Esophagus muscularis mucosa (tissue), 4 donors: ENCODE measurements at regions of chr7 and their contacts with region 1.

Region 1: DNA sequence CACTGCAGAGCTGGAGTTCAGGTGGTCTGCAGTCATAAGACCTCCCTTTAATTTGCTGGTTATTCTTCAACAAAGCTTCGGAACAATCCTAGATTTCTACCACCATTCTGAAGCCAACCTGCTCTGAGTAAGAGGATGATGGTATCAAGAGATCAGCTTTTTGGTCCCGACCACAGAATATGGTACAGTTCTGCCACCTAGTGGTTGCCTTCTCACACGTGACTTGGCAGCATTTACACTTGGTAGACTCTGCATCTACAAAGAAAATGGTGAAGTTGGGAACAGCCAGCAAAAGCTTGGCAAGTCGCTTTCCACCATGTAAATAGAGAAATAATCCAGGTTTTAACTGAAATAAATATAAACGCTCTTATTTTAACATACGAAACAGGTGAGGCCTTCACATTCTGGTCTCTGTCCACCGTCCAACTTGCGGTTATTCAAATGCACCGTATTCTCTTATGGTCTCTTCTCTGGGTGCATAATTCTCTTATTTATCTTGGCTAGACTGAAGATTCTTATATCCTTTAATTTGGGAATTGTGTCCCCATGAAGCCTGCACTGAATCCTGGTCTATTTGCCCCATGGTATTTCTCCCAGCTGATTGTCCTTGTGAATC is 173.9 kb upstream of the GRM3 start:
- DNase-seq: no peak
- H3K4me3 ChIP-seq: no peak overlapping the region
- H3K27ac ChIP-seq: no peak overlapping the region
- H3K4me1 ChIP-seq: no peaks in the 10 kb centered on the region
- H3K27me3 ChIP-seq: no peaks in the 10 kb centered on the region
- CTCF ChIP-seq: peak in 2 of 3 experiments; percentile 30 to 56
- EP300 ChIP-seq: no peak
- POLR2A ChIP-seq: no peak

Region 2: DNA sequence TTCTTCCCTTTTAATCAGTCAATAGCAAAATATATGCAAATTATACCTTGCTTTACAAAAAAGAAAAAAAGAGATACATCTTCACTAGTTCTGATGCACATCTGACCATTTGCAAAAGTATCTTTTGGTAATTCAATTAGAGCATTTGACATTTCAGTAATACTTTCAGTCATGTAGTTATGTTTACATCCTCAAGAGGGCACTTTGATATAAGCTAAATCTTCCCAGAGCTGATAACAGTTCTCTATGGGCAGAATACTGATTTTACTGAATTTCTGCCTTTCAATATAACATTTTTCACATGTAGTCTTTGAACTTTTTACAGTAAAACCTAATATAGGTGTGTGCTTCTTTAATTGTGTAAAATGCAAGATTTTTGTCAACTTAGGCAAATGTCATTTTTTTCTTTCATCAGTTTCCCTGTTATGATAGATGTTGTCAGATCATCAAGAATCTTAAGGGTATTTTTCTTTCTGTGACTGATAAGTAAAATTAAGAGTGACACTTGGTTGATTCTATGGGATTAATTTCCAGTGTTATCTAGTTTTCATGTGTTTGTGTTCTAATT is 579.5 kb before region 1 on chr7:
- intact Hi-C with region 1: loop called (anchors 10 kb)
- DNase-seq: no peak
- H3K4me3 ChIP-seq: no peak overlapping the region
- H3K27ac ChIP-seq: no peak overlapping the region
- H3K4me1 ChIP-seq: no peaks in the 10 kb centered on the region
- H3K27me3 ChIP-seq: no peaks in the 10 kb centered on the region
- CTCF ChIP-seq: peak in 2 of 3 experiments; percentile 26 to 41
- EP300 ChIP-seq: no peak
- POLR2A ChIP-seq: no peak

Region 3: GRCh38 chr7:86282014-86282682 is 187.6 kb before region 1 on chr7:
- intact Hi-C with region 1: no loop called
- DNase-seq: no peak
- H3K4me3 ChIP-seq: no peak overlapping the region
- H3K27ac ChIP-seq: no peak overlapping the region
- H3K4me1 ChIP-seq: no peaks in the 10 kb centered on the region
- H3K27me3 ChIP-seq: no peaks in the 10 kb centered on the region
- CTCF ChIP-seq: no peak
- EP300 ChIP-seq: no peak
- POLR2A ChIP-seq: no peak